CD4-positive, alpha-beta memory T cell (primary cell): ENCODE measurements at regions of chr12 and their contacts with region 1.

Region 1: GRCh38 chr12:6688999-6689882 is at the start of gene ZNF384:
- DNase-seq: peak; percentile 93 to 98 (median 97)
- H3K4me3 ChIP-seq: peak within 1 kb of the TSS; percentile 59 to 83
- H3K4me3 Mint-ChIP-seq: peak within 1 kb of the TSS; percentile 92 to 98 (median 96)
- H3K27ac ChIP-seq: peak within 1 kb of the TSS; percentile 93
- H3K27ac Mint-ChIP-seq: peak within 1 kb of the TSS; percentile 92 to 100 (median 99)
- H3K4me1 ChIP-seq: peaks cover 58% of the 10 kb centered on the region
- H3K4me1 Mint-ChIP-seq: peaks cover 40 to 59% (median 46%) of the 10 kb centered on the region in 4 donors
- H3K27me3 ChIP-seq: no peaks in the 10 kb centered on the region
- H3K27me3 Mint-ChIP-seq: no peaks in the 10 kb centered on the region
- total RNA-seq, gene ZNF384: 88.6 to 88.7 TPM

Region 2: DNA sequence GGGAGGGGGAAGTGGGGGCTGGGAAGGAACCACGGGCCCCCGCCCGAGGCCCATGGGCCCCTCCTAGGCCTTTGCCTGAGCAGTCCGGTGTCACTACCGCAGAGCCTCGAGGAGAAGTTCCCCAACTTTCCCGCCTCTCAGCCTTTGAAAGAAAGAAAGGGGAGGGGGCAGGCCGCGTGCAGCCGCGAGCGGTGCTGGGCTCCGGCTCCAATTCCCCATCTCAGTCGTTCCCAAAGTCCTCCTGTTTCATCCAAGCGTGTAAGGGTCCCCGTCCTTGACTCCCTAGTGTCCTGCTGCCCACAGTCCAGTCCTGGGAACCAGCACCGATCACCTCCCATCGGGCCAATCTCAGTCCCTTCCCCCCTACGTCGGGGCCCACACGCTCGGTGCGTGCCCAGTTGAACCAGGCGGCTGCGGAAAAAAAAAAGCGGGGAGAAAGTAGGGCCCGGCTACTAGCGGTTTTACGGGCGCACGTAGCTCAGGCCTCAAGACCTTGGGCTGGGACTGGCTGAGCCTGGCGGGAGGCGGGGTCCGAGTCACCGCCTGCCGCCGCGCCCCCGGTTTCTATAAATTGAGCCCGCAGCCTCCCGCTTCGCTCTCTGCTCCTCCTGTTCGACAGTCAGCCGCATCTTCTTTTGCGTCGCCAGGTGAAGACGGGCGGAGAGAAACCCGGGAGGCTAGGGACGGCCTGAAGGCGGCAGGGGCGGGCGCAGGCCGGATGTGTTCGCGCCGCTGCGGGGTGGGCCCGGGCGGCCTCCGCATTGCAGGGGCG is 155.1 kb before region 1 on chr12 and contains the start of gene GAPDH:
- CTCF ChIA-PET with region 1: no interaction called
- POLR2A ChIA-PET with region 1: interaction called, 16 read pairs
- intact Hi-C with region 1: no loop called
- DNase-seq: peak; percentile 85 to 89 (median 88)
- H3K4me3 ChIP-seq: peak within 1 kb of the TSS; percentile 79 to 81
- H3K4me3 Mint-ChIP-seq: peak within 1 kb of the TSS; percentile 90 to 98 (median 94)
- H3K27ac ChIP-seq: peak within 1 kb of the TSS; percentile 86
- H3K27ac Mint-ChIP-seq: peak within 1 kb of the TSS; percentile 88 to 99 (median 99)
- H3K4me1 ChIP-seq: peaks cover 62% of the 10 kb centered on the region
- H3K4me1 Mint-ChIP-seq: peaks cover 30 to 67% (median 45%) of the 10 kb centered on the region in 4 donors
- H3K27me3 ChIP-seq: no peaks in the 10 kb centered on the region
- H3K27me3 Mint-ChIP-seq: no peaks in the 10 kb centered on the region
- total RNA-seq, gene GAPDH: 474 to 495 TPM

Region 3: GRCh38 chr12:6613776-6614512 is 75.3 kb before region 1 on chr12:
- CTCF ChIA-PET with region 1: interaction called, 5 read pairs
- POLR2A ChIA-PET with region 1: interaction called, 25 read pairs
- intact Hi-C with region 1: loop called (anchors 2 kb)
- DNase-seq: peak in 4 of 5 donors; percentile 42 to 60 (median 53)
- H3K4me3 ChIP-seq: no peak overlapping the region
- H3K4me3 Mint-ChIP-seq: peak overlapping the region in 1 of 8 donors; percentile 67
- H3K27ac ChIP-seq: no peak overlapping the region
- H3K27ac Mint-ChIP-seq: peak overlapping the region; percentile 26 to 93 (median 85)
- H3K4me1 ChIP-seq: peaks cover 31% of the 10 kb centered on the region
- H3K4me1 Mint-ChIP-seq: peaks cover 23 to 50% (median 34%) of the 10 kb centered on the region in 4 donors
- H3K27me3 ChIP-seq: no peaks in the 10 kb centered on the region
- H3K27me3 Mint-ChIP-seq: no peaks in the 10 kb centered on the region

Region 4: GRCh38 chr12:6723607-6724396 is 34.6 kb after region 1 on chr12 and contains the start of gene COPS7A:
- CTCF ChIA-PET with region 1: interaction called, 24 read pairs
- POLR2A ChIA-PET with region 1: interaction called, 158 read pairs
- intact Hi-C with region 1: loop called (anchors 1 kb)
- DNase-seq: peak; percentile 93 to 97 (median 96)
- H3K4me3 ChIP-seq: peak within 1 kb of the TSS; percentile 40 to 64
- H3K4me3 Mint-ChIP-seq: peak within 1 kb of the TSS; percentile 88 to 98 (median 94)
- H3K27ac ChIP-seq: peak within 1 kb of the TSS; percentile 68
- H3K27ac Mint-ChIP-seq: peak within 1 kb of the TSS; percentile 92 to 99 (median 98)
- H3K4me1 ChIP-seq: peaks cover 21% of the 10 kb centered on the region
- H3K4me1 Mint-ChIP-seq: peaks cover 15 to 31% (median 22%) of the 10 kb centered on the region in 4 donors
- H3K27me3 ChIP-seq: no peaks in the 10 kb centered on the region
- H3K27me3 Mint-ChIP-seq: no peaks in the 10 kb centered on the region
- total RNA-seq, gene COPS7A: 36.9 to 37.7 TPM

Region 5: GRCh38 chr12:6825398-6826124 is 136.3 kb after region 1 on chr12:
- CTCF ChIA-PET with region 1: interaction called, 3 read pairs
- POLR2A ChIA-PET with region 1: interaction called, 7 read pairs
- intact Hi-C with region 1: loop called (anchors 5 kb)
- DNase-seq: peak; percentile 73 to 82 (median 78)
- H3K4me3 ChIP-seq: no peak overlapping the region
- H3K4me3 Mint-ChIP-seq: peak overlapping the region in 1 of 8 donors; percentile 57
- H3K27ac ChIP-seq: no peak overlapping the region
- H3K27ac Mint-ChIP-seq: peak overlapping the region in 4 of 7 donors; percentile 24 to 71 (median 34)
- H3K4me1 ChIP-seq: peaks cover 36% of the 10 kb centered on the region
- H3K4me1 Mint-ChIP-seq: peaks cover 17 to 60% (median 28%) of the 10 kb centered on the region in 4 donors
- H3K27me3 ChIP-seq: peaks cover 10% of the 10 kb centered on the region
- H3K27me3 Mint-ChIP-seq: peaks cover 6 to 24% of the 10 kb centered on the region in 2 donors

Region 6: DNA sequence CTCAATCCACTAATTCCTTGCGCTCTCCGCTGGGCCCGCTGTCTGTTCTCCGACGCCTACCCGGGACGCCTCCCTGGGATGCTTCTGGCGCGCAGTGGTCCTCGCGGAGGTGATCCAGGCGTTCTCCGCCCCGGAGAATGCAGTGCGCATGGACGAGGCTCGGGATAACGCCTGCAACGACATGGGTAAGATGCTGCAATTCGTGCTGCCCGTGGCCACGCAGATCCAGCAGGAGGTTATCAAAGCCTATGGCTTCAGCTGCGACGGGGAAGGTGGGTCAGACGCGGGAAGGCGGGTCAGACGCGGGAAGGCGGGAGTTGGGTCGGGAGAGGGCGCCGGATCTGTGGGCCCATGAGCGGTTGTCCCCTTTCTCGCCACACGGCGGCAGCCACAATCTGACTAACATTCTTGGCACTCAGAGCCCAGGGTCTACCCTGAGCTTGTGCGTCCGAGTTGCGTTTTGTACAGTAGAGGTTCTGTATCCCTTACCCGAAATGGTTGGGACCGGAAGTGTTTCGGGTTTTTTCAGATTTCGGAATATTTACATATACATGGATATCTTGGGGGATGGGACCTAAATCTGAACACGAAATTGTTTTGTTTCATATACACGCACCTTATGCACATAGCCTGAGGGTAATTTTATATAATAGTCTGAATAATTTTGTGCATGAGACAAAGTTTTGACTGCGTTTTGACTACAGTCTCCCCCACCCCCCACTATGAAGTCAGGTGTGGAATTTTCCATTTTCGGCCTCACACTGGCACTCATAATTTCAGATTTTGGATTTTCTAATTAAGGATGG is 255.3 kb after region 1 on chr12:
- CTCF ChIA-PET with region 1: no interaction called
- POLR2A ChIA-PET with region 1: interaction called, 14 read pairs
- intact Hi-C with region 1: no loop called
- DNase-seq: peak; percentile 84 to 90 (median 85)
- H3K4me3 ChIP-seq: peak overlapping the region; percentile 87 to 90
- H3K4me3 Mint-ChIP-seq: peak overlapping the region; percentile 91 to 99 (median 98)
- H3K27ac ChIP-seq: peak overlapping the region; percentile 91
- H3K27ac Mint-ChIP-seq: peak overlapping the region; percentile 95 to 100 (median 98)
- H3K4me1 ChIP-seq: peaks cover 66% of the 10 kb centered on the region
- H3K4me1 Mint-ChIP-seq: peaks cover 37 to 74% (median 60%) of the 10 kb centered on the region in 4 donors
- H3K27me3 ChIP-seq: no peaks in the 10 kb centered on the region
- H3K27me3 Mint-ChIP-seq: no peaks in the 10 kb centered on the region